Activated CD4-positive, alpha-beta memory T cell treated with anti-CD3 and anti-CD28 coated beads for 36 hours (primary cell): ENCODE measurements at regions of chr17 and their contacts with region 1.

Region 1: GRCh38 chr17:75261336-75262111 is at the starts of genes GGA3 and MRPS7:
- DNase-seq: peak; percentile 96
- H3K4me3 Mint-ChIP-seq: peak within 1 kb of the TSS; percentile 93
- H3K27ac Mint-ChIP-seq: peak within 1 kb of the TSS; percentile 96
- H3K4me1 Mint-ChIP-seq: peaks cover 49% of the 10 kb centered on the region
- H3K27me3 Mint-ChIP-seq: no peaks in the 10 kb centered on the region
- total RNA-seq, gene GGA3: 68.5 to 70.7 TPM
- total RNA-seq, gene MRPS7: 72.9 to 76.1 TPM

Region 2: GRCh38 chr17:75154195-75155106 is 107.1 kb before region 1 on chr17 and contains the start of gene JPT1:
- CTCF ChIA-PET with region 1: no interaction called
- POLR2A ChIA-PET with region 1: interaction called, 6 read pairs
- intact Hi-C with region 1: loop called (anchors 1 kb)
- DNase-seq: peak; percentile 99
- H3K4me3 Mint-ChIP-seq: peak within 1 kb of the TSS; percentile 95
- H3K27ac Mint-ChIP-seq: peak within 1 kb of the TSS; percentile 86
- H3K4me1 Mint-ChIP-seq: peaks cover 34% of the 10 kb centered on the region
- H3K27me3 Mint-ChIP-seq: no peaks in the 10 kb centered on the region
- total RNA-seq, gene JPT1: 263 to 267 TPM

Region 3: DNA sequence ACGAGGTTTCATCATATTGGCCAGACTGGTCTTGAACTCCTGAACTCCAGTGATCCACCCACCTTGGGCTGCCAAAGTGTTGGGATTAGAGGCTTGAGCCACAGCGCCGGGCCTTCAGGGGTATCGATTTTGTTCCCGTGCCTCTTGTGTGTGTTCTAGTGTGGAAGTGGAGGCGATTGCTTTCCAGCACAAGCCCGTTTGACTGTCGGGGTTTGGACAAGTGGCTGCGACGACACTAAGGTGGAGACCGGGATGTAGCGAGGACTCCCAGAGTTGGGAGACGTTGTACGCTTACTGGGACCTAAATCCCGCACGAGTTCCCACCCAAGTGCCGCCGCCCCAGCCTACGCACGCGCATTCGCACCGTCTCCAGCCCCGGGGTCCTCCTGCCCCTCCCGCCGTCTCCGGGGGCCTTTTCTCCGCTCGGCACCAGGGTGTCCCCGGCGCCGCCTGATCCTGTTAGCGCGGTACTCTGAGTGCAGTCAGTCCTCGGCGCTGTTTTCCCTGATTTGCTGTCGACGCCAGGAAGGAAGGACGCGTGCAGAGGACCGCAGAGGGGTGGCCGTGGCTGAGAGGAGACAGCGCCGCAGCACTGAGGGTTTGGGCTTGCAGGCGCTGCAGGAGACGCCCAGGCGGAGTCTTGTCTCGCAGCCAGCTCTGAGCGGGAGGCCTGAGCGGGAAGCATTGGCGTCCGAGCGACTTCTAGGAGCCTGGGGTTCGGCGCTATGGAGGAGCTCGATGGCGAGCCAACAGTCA is 56.3 kb before region 1 on chr17 and contains the start of gene NUP85:
- CTCF ChIA-PET with region 1: no interaction called
- POLR2A ChIA-PET with region 1: interaction called, 9 read pairs
- intact Hi-C with region 1: loop called (anchors 5 kb)
- DNase-seq: peak; percentile 95
- H3K4me3 Mint-ChIP-seq: peak within 1 kb of the TSS; percentile 81
- H3K27ac Mint-ChIP-seq: peak within 1 kb of the TSS; percentile 89
- H3K4me1 Mint-ChIP-seq: peaks cover 18% of the 10 kb centered on the region
- H3K27me3 Mint-ChIP-seq: no peaks in the 10 kb centered on the region
- total RNA-seq, gene NUP85: 125 to 132 TPM

Region 4: DNA sequence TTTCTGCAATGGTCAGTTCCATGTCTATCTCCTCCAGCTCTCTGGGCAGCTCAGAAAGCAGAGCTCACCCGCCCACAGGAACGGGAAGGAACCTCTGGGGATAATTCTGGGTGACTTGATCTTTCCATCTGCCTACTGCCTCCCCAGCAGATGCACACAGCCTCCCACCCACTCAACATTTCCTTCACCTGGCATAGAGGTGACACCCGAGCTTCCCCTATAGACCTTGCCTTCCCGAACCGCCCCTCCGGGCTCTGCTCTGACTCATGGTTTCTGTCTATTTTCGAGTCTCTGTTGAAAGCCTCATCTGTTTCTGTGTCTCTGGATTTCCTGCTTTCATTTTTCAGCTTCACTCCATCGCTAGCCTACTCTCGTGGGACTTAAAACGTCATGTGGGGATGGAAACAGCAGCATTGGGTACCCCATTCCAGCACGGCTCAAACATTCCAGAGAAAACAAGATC is 11.5 kb before region 1 on chr17:
- CTCF ChIA-PET with region 1: interaction called, 28 read pairs
- POLR2A ChIA-PET with region 1: interaction called, 74 read pairs
- intact Hi-C with region 1: loop called (anchors 1 kb)
- DNase-seq: peak; percentile 91
- H3K4me3 Mint-ChIP-seq: peak overlapping the region; percentile 58
- H3K27ac Mint-ChIP-seq: peak overlapping the region; percentile 90
- H3K4me1 Mint-ChIP-seq: peaks cover 64% of the 10 kb centered on the region
- H3K27me3 Mint-ChIP-seq: no peaks in the 10 kb centered on the region

Region 5: DNA sequence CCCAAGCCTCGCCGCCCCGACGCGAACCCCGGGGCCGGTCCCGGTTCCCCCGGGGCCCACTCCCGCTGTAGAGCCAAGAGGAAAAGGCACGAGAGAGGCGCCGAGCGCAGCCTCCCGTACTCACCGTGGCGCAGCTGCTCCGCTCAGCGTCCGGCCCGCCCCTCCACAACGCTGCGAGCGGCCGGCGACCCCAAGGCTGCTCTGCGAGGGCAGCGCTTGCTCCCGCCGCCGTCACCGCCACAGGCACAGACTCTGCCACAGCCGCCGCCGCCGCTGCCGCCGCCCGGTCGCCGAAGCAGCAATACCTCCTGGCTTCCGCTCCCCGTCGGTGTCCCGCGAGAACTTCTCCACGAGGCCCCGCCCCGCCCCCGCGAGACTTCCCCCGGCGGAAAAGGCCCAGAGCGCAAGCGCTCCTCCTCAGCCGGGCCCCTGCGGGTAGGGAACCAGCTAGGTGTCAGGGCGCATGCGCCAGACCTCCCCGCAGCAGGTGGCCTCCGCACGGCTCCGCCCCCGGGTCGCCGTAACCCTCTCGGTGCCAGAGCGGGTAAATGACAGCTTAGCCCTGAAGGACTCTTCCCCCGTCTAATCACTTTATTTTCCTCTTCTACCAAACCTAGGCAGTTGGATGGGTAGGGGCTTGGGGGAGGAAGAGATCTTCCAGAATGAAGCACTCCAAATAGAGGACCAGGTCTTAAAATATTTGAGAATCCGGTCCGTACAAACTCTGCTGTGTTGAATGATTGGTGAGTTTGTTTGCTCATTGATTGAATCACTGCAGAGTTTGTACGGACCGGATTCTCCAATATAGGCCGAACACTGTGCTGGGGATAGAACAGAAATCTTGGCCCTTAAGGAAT is 144.1 kb after region 1 on chr17 and contains the start of gene GRB2:
- CTCF ChIA-PET with region 1: interaction called, 7 read pairs
- POLR2A ChIA-PET with region 1: interaction called, 18 read pairs
- intact Hi-C with region 1: loop called (anchors 1 kb)
- DNase-seq: peak; percentile 100
- H3K4me3 Mint-ChIP-seq: peak within 1 kb of the TSS; percentile 89
- H3K27ac Mint-ChIP-seq: peak within 1 kb of the TSS; percentile 95
- H3K4me1 Mint-ChIP-seq: peaks cover 31% of the 10 kb centered on the region
- H3K27me3 Mint-ChIP-seq: no peaks in the 10 kb centered on the region
- total RNA-seq, gene GRB2: 174 to 182 TPM